Activated CD4-positive, alpha-beta T cell treated with anti-CD3 and anti-CD28 coated beads, Interleukin-2, amount 10 ng/mL, durations not matched to agents 24 days and 14 days (primary cell): ENCODE measurements at regions of chr16 and their contacts with region 1.

Region 1: DNA sequence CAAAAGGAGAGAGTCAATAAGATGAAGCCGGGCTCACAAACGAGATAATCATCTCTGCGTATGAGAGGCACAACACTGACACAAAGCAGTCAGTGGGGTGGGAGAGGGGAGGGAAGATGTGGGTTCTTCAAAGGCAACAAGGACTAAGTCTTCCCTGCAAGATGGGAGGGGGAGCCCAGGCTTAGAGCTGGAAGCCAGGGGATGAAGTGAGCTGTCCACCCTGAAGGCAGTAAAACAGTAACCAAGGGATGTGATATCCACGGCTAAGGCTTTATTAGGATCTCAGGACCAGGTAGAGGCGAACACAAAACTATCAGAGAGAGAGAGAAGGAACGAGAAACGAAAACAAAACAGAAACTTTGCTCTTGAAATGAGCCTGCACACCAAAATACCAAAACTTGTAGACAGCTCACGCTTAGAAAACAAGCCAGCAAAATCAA is 115.9 kb downstream of the DYNLRB2 start:
- DNase-seq: peak; percentile 86
- H3K4me3 Mint-ChIP-seq: peak overlapping the region; percentile 85
- H3K27ac Mint-ChIP-seq: peak overlapping the region; percentile 94
- H3K4me1 Mint-ChIP-seq: peaks cover 31% of the 10 kb centered on the region
- H3K27me3 Mint-ChIP-seq: no peaks in the 10 kb centered on the region

Region 2: DNA sequence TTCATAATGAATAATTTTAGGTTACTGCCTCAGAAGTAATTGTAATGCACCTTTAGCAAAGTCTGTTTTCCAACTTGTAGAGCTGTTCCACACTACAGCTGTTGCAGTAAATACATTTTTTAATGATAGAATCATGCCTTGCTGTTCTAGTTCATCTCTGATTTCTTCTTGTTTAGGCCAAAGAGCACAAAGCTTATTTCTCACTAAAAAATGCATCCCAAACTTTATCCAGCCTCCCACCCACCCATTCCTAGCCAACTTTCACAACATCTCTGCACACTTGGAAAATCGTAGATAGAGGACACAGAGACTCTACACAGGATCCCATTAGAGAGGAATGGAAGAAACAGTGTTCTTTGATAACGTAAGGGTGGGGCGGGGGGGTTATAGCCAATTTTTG is 368.1 kb before region 1 on chr16:
- intact Hi-C with region 1: no loop called
- DNase-seq: no peak
- H3K4me3 Mint-ChIP-seq: no peak overlapping the region
- H3K27ac Mint-ChIP-seq: no peak overlapping the region
- H3K4me1 Mint-ChIP-seq: no peaks in the 10 kb centered on the region
- H3K27me3 Mint-ChIP-seq: peaks cover 6% of the 10 kb centered on the region

Region 3: DNA sequence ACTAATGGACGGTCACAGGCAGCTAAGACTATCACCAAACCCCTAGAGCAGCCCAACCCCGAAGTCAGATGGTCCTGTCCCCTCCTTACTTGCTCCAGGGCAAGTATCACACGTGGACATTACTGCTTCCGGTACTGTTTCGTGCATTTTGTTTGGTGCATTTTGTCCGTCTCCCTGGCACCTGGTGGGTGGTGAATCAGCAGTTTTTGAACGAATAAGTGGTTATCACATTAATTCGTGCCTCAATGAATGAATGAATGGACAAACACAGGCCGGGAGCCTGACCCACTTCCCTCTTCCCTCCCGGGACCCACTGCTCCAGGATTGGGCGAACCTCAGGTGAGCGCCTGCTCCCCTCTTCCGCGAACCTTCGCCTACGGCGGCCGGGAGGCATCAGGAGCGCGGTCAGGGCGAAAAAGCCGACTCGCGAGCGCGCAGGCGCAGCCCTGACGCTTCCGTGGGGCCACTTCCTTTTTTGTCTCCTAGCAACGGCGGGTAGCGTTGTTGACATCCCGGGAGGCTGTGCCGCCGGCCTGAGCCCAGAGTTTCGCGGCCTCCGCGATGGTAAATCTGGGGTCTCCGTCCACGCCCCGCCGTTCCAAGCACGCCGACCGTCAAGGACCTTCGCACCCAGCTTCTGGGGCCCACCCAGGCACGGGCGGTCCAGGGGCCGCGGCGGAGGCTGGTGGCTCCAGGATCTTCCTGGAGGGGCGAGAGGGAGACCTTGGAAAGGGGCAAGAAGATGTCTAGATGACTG is 116.0 kb before region 1 on chr16 and contains the start of gene DYNLRB2:
- intact Hi-C with region 1: loop called (anchors 1 kb)
- DNase-seq: peak; percentile 98
- H3K4me3 Mint-ChIP-seq: peak within 1 kb of the TSS; percentile 96
- H3K27ac Mint-ChIP-seq: peak within 1 kb of the TSS; percentile 98
- H3K4me1 Mint-ChIP-seq: peaks cover 32% of the 10 kb centered on the region
- H3K27me3 Mint-ChIP-seq: peaks cover 9% of the 10 kb centered on the region
- total RNA-seq, gene DYNLRB2: not detected in 2 replicates

Region 4: DNA sequence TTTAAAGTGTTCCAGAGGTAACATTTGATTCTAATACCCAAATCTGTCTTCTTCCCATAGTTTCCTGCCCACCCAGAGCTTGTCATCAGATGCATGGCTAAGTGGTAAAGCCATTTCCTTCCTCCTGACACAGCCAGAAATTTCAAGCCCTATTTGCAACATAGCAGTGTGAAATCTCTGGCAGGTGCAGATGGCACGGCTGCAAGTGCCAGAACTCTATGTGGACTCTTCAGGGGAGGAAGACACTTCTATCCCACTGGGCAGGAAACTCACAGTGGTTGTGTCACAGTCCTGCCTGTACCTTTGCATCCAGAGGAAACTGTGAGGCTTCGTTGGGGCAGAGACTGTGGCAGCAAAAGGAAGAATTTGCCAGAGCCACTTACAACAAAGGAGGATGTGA is 102.7 kb before region 1 on chr16:
- intact Hi-C with region 1: no loop called
- DNase-seq: no peak
- H3K4me3 Mint-ChIP-seq: no peak overlapping the region
- H3K27ac Mint-ChIP-seq: no peak overlapping the region
- H3K4me1 Mint-ChIP-seq: peaks cover 19% of the 10 kb centered on the region
- H3K27me3 Mint-ChIP-seq: peaks cover 1% of the 10 kb centered on the region

Region 5: GRCh38 chr16:80671281-80671849 is 14.6 kb after region 1 on chr16:
- intact Hi-C with region 1: loop called (anchors 1 kb)
- DNase-seq: peak; percentile 47
- H3K4me3 Mint-ChIP-seq: no peak overlapping the region
- H3K27ac Mint-ChIP-seq: no peak overlapping the region
- H3K4me1 Mint-ChIP-seq: peaks cover 29% of the 10 kb centered on the region
- H3K27me3 Mint-ChIP-seq: no peaks in the 10 kb centered on the region

Region 6: DNA sequence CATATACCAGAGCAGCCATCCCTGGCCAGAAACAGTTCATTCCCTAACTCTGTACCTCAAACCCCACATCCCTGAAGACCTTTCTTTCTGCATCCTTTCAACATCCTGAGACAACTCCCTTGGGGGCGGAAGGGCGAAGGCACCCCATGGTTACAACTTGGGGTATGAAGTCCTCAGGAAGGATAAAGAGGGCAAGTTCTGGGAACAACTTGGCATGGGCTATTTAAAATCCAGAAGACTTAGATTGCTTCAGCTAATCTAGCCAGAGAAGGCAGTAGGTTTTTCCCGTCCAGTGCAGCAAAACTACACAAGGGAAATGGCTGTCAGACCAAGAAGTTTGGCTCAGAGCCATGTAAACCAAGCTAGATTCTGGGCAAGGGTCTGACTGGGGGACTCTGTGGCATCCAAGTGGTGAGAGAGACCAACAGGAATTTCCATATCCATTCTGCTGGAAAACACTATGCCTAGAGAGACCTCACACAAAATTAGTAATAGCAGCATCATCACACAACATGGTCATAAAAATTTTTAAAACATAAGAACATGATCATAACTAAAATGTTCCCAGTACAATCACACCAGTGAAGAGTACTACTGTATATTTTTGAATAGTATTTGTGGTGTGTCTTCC is 34.5 kb after region 1 on chr16:
- intact Hi-C with region 1: loop called (anchors 2 kb)
- DNase-seq: no peak
- H3K4me3 Mint-ChIP-seq: no peak overlapping the region
- H3K27ac Mint-ChIP-seq: no peak overlapping the region
- H3K4me1 Mint-ChIP-seq: peaks cover 64% of the 10 kb centered on the region
- H3K27me3 Mint-ChIP-seq: no peaks in the 10 kb centered on the region

Region 7: GRCh38 chr16:80703131-80704071 is 46.7 kb after region 1 on chr16:
- intact Hi-C with region 1: no loop called
- DNase-seq: no peak
- H3K4me3 Mint-ChIP-seq: no peak overlapping the region
- H3K27ac Mint-ChIP-seq: no peak overlapping the region
- H3K4me1 Mint-ChIP-seq: peaks cover 27% of the 10 kb centered on the region
- H3K27me3 Mint-ChIP-seq: no peaks in the 10 kb centered on the region

Region 8: DNA sequence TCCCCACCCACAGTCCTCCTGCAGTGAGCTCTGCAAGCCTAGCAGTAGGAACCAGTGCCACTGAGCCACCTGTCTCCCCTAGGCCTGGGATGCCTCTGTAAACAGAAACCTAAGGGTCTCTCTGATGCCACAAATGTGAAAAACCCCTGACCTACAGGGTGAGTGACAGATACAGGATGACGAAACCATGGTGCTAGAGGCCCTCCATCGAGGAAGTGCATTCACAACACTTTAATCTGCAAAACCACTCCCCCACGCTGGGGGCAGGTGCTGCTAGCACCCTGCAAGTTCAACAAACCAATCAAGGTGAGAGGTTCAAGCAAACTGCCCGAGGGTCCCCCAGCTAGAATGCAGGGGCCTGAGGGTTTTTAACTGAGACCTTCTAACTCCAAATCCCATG is 88.1 kb after region 1 on chr16:
- intact Hi-C with region 1: loop called (anchors 5 kb)
- DNase-seq: peak; percentile 59
- H3K4me3 Mint-ChIP-seq: no peak overlapping the region
- H3K27ac Mint-ChIP-seq: no peak overlapping the region
- H3K4me1 Mint-ChIP-seq: peaks cover 43% of the 10 kb centered on the region
- H3K27me3 Mint-ChIP-seq: no peaks in the 10 kb centered on the region

Region 9: GRCh38 chr16:80824718-80825364 is 168.1 kb after region 1 on chr16:
- intact Hi-C with region 1: loop called (anchors 2 kb)
- DNase-seq: peak; percentile 84
- H3K4me3 Mint-ChIP-seq: no peak overlapping the region
- H3K27ac Mint-ChIP-seq: no peak overlapping the region
- H3K4me1 Mint-ChIP-seq: peaks cover 2% of the 10 kb centered on the region
- H3K27me3 Mint-ChIP-seq: peaks cover 24% of the 10 kb centered on the region

Region 10: GRCh38 chr16:80997139-80997798 is 340.5 kb after region 1 on chr16:
- intact Hi-C with region 1: loop called (anchors 5 kb)
- DNase-seq: peak; percentile 67
- H3K4me3 Mint-ChIP-seq: peak overlapping the region; percentile 88
- H3K27ac Mint-ChIP-seq: peak overlapping the region; percentile 89
- H3K4me1 Mint-ChIP-seq: peaks cover 48% of the 10 kb centered on the region
- H3K27me3 Mint-ChIP-seq: no peaks in the 10 kb centered on the region